ENCODE measurements at regions of chr1 and their contacts with region 1.

Region 1: DNA sequence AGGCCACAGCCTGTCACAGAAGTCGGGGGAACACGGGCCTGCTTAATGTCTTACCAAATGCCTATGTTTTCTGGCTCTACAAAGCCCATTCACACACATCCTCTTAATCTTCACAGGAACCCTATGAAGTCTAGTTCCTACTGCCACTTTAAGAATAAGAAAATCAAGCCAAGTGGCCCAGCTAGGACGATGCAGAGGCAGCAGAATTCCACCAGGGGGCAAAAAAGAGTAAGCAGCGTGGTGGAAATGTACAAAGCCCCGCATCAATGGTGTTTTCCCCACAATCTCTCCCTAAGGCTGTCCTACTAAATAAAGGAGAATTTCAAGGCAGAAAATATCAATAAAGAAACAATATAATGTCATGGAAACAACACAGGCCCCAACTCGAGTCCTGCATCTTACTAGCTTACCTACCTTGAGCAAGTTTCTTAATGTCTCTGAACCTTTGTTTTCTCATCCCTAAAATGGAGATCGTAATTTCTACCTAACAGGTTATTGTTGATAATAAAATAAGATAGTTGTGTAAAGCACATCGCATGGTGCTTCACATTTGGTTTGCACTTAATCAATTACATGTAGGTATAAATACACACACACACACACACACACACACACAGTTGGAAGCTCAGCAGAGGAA is 21.4 kb downstream of the SEC16B start:
- DNase-seq: no peak
- ATAC-seq: peak; percentile 87
- H3K4me3 ChIP-seq: no peak overlapping the region
- H3K27ac ChIP-seq: no peak overlapping the region
- H3K4me1 ChIP-seq: no peaks in the 10 kb centered on the region
- H3K27me3 ChIP-seq: no peaks in the 10 kb centered on the region; a peak in 1 of 4 replicates
- CTCF ChIP-seq: peak; percentile 80 to 88 (median 87)
- EP300 ChIP-seq: no peak
- POLR2A ChIP-seq: no peak
- RAD21 ChIP-seq: peak; percentile 66

Region 2: GRCh38 chr1:176949033-176949662 is 999.3 kb before region 1 on chr1:
- CTCF ChIA-PET with region 1: interaction called, 7 read pairs
- POLR2A ChIA-PET with region 1: no interaction called
- RAD21 ChIA-PET with region 1: interaction called, 5 read pairs
- SMC1A ChIA-PET with region 1: no interaction called
- in situ Hi-C with region 1: no loop called
- intact Hi-C with region 1: loop called (anchors 5 kb)
- DNase-seq: no peak
- ATAC-seq: peak; percentile 99
- H3K4me3 ChIP-seq: no peak overlapping the region
- H3K27ac ChIP-seq: no peak overlapping the region
- H3K4me1 ChIP-seq: no peaks in the 10 kb centered on the region
- H3K27me3 ChIP-seq: no peaks in the 10 kb centered on the region
- CTCF ChIP-seq: peak; percentile 60 to 74 (median 73)
- EP300 ChIP-seq: no peak
- POLR2A ChIP-seq: no peak
- RAD21 ChIP-seq: 0 out of 2 replicates have a peak, but pooled peaks have one; percentile 31

Region 3: GRCh38 chr1:177256153-177257075 is 692.0 kb before region 1 on chr1:
- CTCF ChIA-PET with region 1: interaction called, 20 read pairs
- POLR2A ChIA-PET with region 1: no interaction called
- RAD21 ChIA-PET with region 1: interaction called, 7 read pairs
- SMC1A ChIA-PET with region 1: interaction called, 7 read pairs
- in situ Hi-C with region 1: loop called (anchors 10 kb)
- intact Hi-C with region 1: loop called (anchors 1 kb)
- DNase-seq: no peak
- ATAC-seq: peak; percentile 84
- H3K4me3 ChIP-seq: no peak overlapping the region
- H3K27ac ChIP-seq: no peak overlapping the region
- H3K4me1 ChIP-seq: no peaks in the 10 kb centered on the region
- H3K27me3 ChIP-seq: no peaks in the 10 kb centered on the region
- CTCF ChIP-seq: peak; percentile 40 to 55 (median 41); a peak in 5 of 6 replicates
- EP300 ChIP-seq: no peak
- POLR2A ChIP-seq: no peak
- RAD21 ChIP-seq: peak; percentile 42

Region 4: DNA sequence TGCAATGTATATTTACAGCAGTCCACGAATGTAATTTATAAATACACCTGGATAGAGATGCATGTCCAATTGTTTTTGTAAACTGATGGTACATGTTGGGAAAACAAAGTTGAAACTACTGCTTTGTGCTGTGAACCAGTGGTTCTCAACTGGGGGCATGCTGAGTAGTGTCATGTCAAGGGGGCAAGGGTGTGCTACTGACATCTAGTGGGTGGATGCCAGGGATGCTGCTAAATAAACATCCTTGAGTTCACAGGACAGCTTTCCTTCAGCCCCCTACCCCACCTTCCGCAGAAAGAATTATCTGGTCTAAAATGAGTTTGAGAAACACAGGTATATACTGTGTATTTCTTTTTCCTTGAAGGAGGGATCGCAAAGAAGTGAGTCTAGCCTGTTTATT is 241.4 kb after region 1 on chr1:
- CTCF ChIA-PET with region 1: interaction called, 7 read pairs
- POLR2A ChIA-PET with region 1: no interaction called
- RAD21 ChIA-PET with region 1: interaction called, 6 read pairs
- SMC1A ChIA-PET with region 1: interaction called, 9 read pairs
- in situ Hi-C with region 1: loop called (anchors 10 kb)
- intact Hi-C with region 1: loop called (anchors 1 kb)
- DNase-seq: peak; percentile 5
- ATAC-seq: peak; percentile 88
- H3K4me3 ChIP-seq: no peak overlapping the region
- H3K27ac ChIP-seq: no peak overlapping the region
- H3K4me1 ChIP-seq: no peaks in the 10 kb centered on the region
- H3K27me3 ChIP-seq: no peaks in the 10 kb centered on the region
- CTCF ChIP-seq: peak; percentile 69 to 82 (median 79)
- EP300 ChIP-seq: no peak
- POLR2A ChIP-seq: no peak
- RAD21 ChIP-seq: peak; percentile 81

Region 5: DNA sequence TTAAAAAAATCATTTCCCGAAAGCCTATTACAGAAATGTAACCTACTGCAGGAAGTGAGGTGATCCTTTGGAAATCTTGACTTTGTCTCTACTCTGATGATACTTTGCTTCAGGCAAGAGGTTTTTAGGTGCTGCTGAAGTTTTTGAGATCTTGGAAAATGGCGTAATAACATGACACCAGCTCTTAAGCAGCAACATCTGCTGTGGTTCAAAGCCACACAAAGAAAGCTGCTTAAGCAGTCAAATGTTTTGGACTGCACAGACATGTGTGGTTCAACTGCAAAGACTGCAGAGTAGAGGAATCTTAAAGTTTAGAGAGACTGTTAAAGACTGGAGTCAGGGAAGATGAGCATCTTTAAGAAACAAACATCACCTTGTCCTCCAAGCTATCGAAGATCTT is 284.5 kb after region 1 on chr1:
- CTCF ChIA-PET with region 1: no interaction called
- POLR2A ChIA-PET with region 1: no interaction called
- RAD21 ChIA-PET with region 1: no interaction called
- SMC1A ChIA-PET with region 1: no interaction called
- in situ Hi-C with region 1: no loop called
- intact Hi-C with region 1: no loop called
- DNase-seq: no peak
- ATAC-seq: no peak
- H3K4me3 ChIP-seq: no peak overlapping the region
- H3K27ac ChIP-seq: no peak overlapping the region
- H3K4me1 ChIP-seq: no peaks in the 10 kb centered on the region
- H3K27me3 ChIP-seq: no peaks in the 10 kb centered on the region
- CTCF ChIP-seq: no peak
- EP300 ChIP-seq: no peak
- POLR2A ChIP-seq: no peak
- RAD21 ChIP-seq: no peak